PC-9 (cell line): ENCODE measurements at regions of chr17 and their contacts with region 1.

Region 1: DNA sequence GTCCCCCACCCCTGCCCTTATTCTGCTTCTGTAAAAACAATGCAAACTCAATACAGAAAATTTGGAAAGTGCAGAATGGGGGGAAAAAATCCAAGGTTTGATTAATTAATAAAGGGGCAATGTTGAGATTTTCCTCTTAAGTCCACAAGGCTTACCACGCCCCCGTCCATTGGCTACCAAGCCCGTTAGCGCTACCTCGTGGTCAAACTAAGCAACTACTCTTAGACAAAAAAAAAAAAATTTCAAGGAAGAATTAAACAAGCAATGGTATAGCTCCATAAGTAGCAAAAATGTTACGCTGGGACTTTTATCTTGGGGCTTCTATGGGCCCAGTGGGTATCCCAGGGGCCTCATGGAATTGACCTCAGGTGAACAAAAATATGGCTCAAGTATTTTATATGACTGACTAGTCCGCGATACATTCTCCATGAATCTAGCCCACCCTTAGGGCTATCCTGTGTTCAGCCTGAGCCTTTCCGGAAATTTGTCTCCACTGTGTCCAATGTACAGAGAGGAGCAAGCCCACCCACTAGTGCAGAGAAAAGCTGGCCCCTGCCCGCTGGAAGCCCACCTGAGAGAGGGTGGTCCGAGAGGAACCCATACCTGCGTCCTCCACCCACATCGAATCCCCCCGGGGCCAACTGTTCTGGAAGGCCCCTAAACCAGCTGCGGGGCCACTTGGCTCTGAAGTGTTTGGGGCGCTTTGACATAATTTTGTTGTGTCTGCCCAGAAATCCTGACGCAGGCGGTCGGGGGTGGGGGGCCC is 19.1 kb upstream of the TEX2 start:
- DNase-seq: peak; percentile 41 to 70
- H3K4me3 ChIP-seq: no peak overlapping the region
- H3K27ac ChIP-seq: no peak overlapping the region
- H3K4me1 ChIP-seq: peaks cover 6% of the 10 kb centered on the region; the same call in 1 of the 2 replicates
- H3K27me3 ChIP-seq: no peaks in the 10 kb centered on the region
- CTCF ChIP-seq: peak; percentile 86

Region 2: DNA sequence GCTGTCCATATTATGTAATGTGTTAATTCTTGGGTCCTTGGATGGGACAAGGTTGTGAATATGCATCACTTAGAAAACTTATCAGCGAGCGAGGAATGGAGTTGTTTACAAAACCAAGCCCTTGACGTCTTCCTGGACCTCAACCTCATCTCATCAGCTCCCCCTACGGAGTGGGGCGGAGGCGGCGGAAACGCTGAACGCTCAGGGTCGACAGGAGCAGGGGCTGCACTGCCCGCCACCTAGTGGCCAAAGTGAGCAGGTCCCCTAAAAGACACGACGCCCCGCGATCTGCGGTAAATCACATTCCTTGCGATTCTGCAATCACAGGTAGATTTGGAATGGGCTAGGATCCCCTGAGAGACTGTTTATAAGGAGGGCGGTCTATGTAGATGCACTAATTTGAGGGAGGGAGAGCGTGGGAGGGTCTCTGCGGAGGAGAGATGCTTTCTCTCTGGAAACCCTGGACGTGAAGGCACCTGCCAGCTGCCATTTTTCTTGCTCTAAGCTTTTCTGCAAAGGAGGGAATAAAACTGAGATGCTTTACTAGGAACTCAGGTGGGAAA is 256.3 kb before region 1 on chr17:
- CTCF ChIA-PET with region 1: interaction called, 7 read pairs
- POLR2A ChIA-PET with region 1: no interaction called
- intact Hi-C with region 1: loop called (anchors 1 kb)
- DNase-seq: peak; percentile 57 to 77
- H3K4me3 ChIP-seq: peak overlapping the region; percentile 16; the same call in 1 of the 2 replicates
- H3K27ac ChIP-seq: no peak overlapping the region
- H3K4me1 ChIP-seq: 0 out of 2 replicates have a peak, but pooled peaks cover 4% of the 10 kb centered on the region
- H3K27me3 ChIP-seq: no peaks in the 10 kb centered on the region
- CTCF ChIP-seq: peak; percentile 96

Region 3: DNA sequence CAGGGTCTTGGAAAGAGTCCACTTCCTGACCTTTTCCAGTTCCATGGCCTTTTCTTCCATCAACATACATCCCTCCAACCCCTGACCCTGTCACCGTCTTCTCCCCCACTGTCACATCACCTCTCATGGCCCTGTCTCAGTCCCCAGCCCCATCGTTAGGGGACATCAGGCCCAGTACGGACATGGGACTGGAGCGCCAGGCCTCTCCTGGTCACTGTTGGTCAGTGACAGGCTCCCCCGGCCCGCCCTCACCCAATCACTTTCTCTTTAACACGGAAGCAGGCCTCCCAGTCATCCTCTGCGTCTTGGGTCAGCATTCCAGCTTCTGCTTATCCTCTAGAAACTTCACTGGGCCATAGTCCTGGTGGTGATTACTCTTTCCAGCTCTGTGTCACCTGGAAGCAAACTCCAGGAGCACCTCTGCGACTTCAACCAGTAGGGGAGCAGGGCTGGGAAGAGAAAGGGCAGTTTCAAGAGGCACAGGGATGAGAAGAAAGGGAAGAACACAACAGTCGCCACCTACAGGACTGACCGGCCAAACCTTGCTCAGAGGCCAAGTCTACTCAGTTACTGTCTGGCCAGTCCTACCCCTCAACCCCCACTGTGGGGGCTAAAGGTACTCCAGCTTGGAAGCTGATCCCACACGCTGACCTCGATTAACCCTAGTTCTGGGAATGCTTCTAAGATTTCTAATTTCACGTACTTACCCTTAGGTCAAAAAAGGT is 245.8 kb before region 1 on chr17:
- CTCF ChIA-PET with region 1: no interaction called
- POLR2A ChIA-PET with region 1: no interaction called
- intact Hi-C with region 1: no loop called
- DNase-seq: no peak
- H3K4me3 ChIP-seq: no peak overlapping the region
- H3K27ac ChIP-seq: no peak overlapping the region
- H3K4me1 ChIP-seq: no peaks in the 10 kb centered on the region
- H3K27me3 ChIP-seq: no peaks in the 10 kb centered on the region
- CTCF ChIP-seq: 0 out of 2 replicates have a peak, but pooled peaks have one; percentile 16

Region 4: GRCh38 chr17:64129764-64130558 is 152.2 kb before region 1 on chr17 and contains the start of gene ERN1:
- CTCF ChIA-PET with region 1: interaction called, 22 read pairs
- POLR2A ChIA-PET with region 1: interaction called, 4 read pairs
- intact Hi-C with region 1: loop called (anchors 1 kb)
- DNase-seq: peak; percentile 79 to 94
- H3K4me3 ChIP-seq: peak within 1 kb of the TSS; percentile 99
- H3K27ac ChIP-seq: peak within 1 kb of the TSS; percentile 72
- H3K4me1 ChIP-seq: peaks cover 29% of the 10 kb centered on the region
- H3K27me3 ChIP-seq: no peaks in the 10 kb centered on the region
- CTCF ChIP-seq: no peak
- total RNA-seq, gene ERN1: 9.2 and 11.7 TPM in 2 replicates

Region 5: GRCh38 chr17:64202675-64203344 is 79.3 kb before region 1 on chr17:
- CTCF ChIA-PET with region 1: no interaction called
- POLR2A ChIA-PET with region 1: no interaction called
- intact Hi-C with region 1: loop called (anchors 5 kb)
- DNase-seq: peak; percentile 54 to 84
- H3K4me3 ChIP-seq: no peak overlapping the region
- H3K27ac ChIP-seq: no peak overlapping the region
- H3K4me1 ChIP-seq: peaks cover 11% of the 10 kb centered on the region
- H3K27me3 ChIP-seq: no peaks in the 10 kb centered on the region
- CTCF ChIP-seq: no peak

Region 6: DNA sequence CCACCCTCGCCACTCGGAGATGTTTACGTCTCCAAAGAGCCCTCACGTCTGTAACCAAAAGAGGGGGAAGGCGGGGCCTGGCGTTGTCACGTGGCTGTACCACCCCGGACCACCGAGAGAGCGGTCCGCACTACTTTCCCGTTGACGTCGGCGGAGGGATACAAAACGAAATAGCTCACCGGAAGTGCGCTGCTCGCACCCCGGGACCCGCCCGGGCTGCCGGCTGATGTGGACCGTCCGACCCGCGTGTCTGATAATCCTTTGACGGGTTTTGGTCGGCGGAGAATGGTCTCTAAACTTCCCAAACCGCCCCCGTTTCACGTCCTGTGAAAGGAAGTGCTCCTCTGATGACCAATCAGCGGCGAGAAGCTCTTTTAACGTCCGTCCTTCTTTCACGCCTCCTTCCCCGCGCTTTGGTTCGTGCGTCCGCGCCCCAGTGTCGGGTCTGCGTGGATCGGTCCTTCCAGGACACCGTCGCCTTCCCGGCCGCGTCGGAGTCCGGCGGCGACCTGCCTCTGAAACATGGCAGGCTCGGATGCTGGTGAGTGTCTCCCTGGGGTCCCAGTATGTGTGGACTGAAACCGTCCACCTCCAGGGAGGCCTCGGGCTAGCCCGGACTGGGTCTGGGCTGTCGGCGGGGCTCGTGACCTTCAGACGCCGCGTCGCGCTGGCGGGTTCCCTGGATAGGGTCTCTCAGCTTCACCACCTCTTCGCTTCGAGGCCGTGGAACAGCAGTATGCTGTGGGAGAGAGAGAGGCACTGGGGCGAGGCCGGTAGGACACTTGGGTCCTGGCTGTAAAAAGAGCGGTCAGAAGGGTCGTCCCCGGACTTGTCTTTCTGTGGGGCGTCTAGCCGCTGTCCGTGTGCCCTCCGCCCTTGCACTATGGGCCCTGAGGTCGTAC is 224.7 kb after region 1 on chr17 and contains the start of gene CEP95:
- CTCF ChIA-PET with region 1: no interaction called
- POLR2A ChIA-PET with region 1: no interaction called
- intact Hi-C with region 1: no loop called
- DNase-seq: peak in 1 of 2 experiments; percentile 80
- H3K4me3 ChIP-seq: peak within 1 kb of the TSS; percentile 100
- H3K27ac ChIP-seq: peak within 1 kb of the TSS; percentile 98
- H3K4me1 ChIP-seq: peaks cover 30% of the 10 kb centered on the region
- H3K27me3 ChIP-seq: no peaks in the 10 kb centered on the region
- CTCF ChIP-seq: no peak
- total RNA-seq, gene CEP95: 56.0 and 57.2 TPM in 2 replicates